ENCODE measurements at regions of chr3 and their contacts with region 1.

Region 1: DNA sequence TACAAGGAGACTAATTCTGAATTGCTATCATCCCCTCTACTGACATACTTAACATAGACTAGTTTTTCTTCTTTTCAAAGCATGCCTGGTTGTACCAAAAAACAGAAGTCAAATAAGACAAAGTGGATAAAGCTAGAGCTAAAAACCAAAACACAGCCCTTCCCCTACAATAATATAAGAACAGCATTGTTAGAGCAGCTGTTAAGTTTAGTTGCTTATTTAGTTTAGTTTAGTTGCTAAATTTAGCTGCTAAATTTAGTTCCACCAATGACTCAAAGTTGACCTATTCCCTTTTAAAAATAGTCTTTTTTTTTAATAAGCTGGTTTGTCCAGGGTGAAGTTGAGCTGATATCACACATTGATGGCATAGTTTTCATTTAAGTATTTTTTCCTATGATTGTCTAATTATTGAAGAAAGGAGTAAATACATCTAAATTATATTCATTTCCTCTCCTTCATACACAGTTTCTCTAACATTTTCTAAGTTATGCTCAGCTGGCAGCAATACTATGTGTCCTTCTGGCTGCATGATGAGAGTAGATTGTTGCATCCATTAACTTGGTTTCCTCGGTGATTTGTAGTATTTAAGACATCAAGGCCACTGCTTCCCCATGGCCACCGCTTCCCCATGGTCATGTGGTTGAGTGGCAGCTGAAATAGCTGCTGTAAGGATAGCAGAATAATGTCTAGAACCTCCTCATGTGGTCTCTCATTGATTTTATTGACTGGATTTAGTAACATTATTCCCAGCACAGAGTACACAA is 718.6 kb upstream of the NECTIN3 start:
- DNase-seq: no peak
- H3K4me3 ChIP-seq: no peak overlapping the region
- H3K27ac ChIP-seq: peak overlapping the region; percentile 24 to 28
- H3K4me1 ChIP-seq: peaks cover 0 to 19% (median 5%) of the 10 kb centered on the region in 4 donors
- H3K27me3 ChIP-seq: no peaks in the 10 kb centered on the region
- CTCF ChIP-seq: no peak

Region 2: GRCh38 chr3:109888026-109888425 is 465.0 kb before region 1 on chr3:
- intact Hi-C with region 1: no loop called
- DNase-seq: no peak
- H3K4me3 ChIP-seq: no peak overlapping the region
- H3K27ac ChIP-seq: no peak overlapping the region
- H3K4me1 ChIP-seq: no peaks in the 10 kb centered on the region
- H3K27me3 ChIP-seq: no peaks in the 10 kb centered on the region
- CTCF ChIP-seq: no peak

Region 3: DNA sequence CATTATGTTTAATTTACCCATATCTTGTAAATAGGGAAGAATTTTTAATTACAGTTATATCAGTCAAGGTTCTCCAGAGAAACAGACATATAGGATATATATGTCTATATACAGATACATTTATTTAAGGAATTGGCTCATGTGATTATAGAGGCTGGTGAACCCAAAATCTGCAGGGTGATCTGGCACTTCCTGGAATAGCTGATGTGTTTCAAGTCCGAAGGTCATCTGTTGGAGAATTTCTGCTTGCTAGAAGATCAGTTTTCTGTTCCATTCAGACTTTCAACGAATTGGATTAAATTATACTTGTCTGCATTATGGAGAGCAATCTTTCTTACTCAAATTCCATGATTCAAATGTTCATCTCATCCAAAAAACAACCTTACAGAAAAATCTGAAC is 321.0 kb before region 1 on chr3:
- intact Hi-C with region 1: loop called (anchors 5 kb)
- DNase-seq: no peak
- H3K4me3 ChIP-seq: no peak overlapping the region
- H3K27ac ChIP-seq: no peak overlapping the region
- H3K4me1 ChIP-seq: no peaks in the 10 kb centered on the region
- H3K27me3 ChIP-seq: no peaks in the 10 kb centered on the region
- CTCF ChIP-seq: no peak

Region 4: GRCh38 chr3:110285027-110285426 is 68.0 kb before region 1 on chr3:
- intact Hi-C with region 1: no loop called
- DNase-seq: no peak
- H3K4me3 ChIP-seq: no peak overlapping the region
- H3K27ac ChIP-seq: no peak overlapping the region
- H3K4me1 ChIP-seq: no peaks in the 10 kb centered on the region
- H3K27me3 ChIP-seq: no peaks in the 10 kb centered on the region
- CTCF ChIP-seq: no peak

Measured in tibial artery (tissue), 4 donors.